A549 (cell line): ENCODE measurements at regions of chr14 and their contacts with region 1.

Region 1: GRCh38 chr14:92728759-92729370 is 19.6 kb downstream of the LGMN start:
- DNase-seq: peak in 1 of 2 experiments; percentile 28
- ATAC-seq: no peak
- H3K4me3 ChIP-seq: no peak overlapping the region
- H3K27ac ChIP-seq: peak overlapping the region in 1 of 2 experiments; percentile 73; a peak in 3 of 6 replicates
- H3K4me1 ChIP-seq: peaks cover 52% of the 10 kb centered on the region
- CTCF ChIP-seq: no peak
- EP300 ChIP-seq: no peak
- POLR2A ChIP-seq: no peak
- RAD21 ChIP-seq: no peak

Region 2: DNA sequence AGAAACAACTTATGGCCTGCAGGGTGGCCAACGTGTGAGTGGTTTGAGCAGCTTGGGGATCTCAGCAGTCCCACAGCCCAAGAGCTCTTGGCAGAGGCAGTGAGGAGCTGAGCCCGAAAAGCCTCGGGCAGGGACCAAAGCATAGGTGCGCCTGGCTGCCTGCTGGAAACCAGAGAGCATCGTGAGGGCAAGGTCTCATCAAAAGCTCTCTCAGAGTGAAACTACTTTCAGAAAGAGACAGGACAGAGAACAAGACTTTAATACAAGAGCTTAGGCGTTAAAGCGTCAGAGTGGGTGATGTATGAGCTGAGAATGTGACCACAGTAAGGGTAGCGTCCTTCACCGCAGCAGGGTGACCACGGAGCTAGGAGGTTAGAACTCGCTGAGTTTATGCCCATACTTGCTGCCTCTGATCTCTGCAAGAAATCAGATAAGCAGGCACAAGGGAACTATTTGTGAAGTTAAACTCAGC is 11.3 kb before region 1 on chr14:
- CTCF ChIA-PET with region 1: interaction called, 54 read pairs
- POLR2A ChIA-PET with region 1: no interaction called
- DNase-seq: no peak
- ATAC-seq: no peak
- H3K4me3 ChIP-seq: no peak overlapping the region
- H3K27ac ChIP-seq: no peak overlapping the region
- H3K4me1 ChIP-seq: peaks cover 15% of the 10 kb centered on the region
- CTCF ChIP-seq: no peak
- EP300 ChIP-seq: no peak
- POLR2A ChIP-seq: no peak
- RAD21 ChIP-seq: no peak

Region 3: GRCh38 chr14:92748259-92749016 is 19.6 kb after region 1 on chr14 and contains the start of gene LGMN:
- CTCF ChIA-PET with region 1: interaction called, 5 read pairs
- POLR2A ChIA-PET with region 1: interaction called, 30 read pairs
- DNase-seq: peak; percentile 94 to 97
- ATAC-seq: peak; percentile 100
- H3K4me3 ChIP-seq: peak within 1 kb of the TSS; percentile 73
- H3K27ac ChIP-seq: peak within 1 kb of the TSS; percentile 75 to 91
- H3K4me1 ChIP-seq: peaks cover 4% of the 10 kb centered on the region; the same call in 1 of the 3 replicates
- CTCF ChIP-seq: no peak
- EP300 ChIP-seq: no peak
- POLR2A ChIP-seq: peak; percentile 97
- RAD21 ChIP-seq: no peak
- polyA plus RNA-seq, gene LGMN: 106 and 136 TPM in 2 replicates

Region 4: GRCh38 chr14:92759300-92759678 is 30.4 kb after region 1 on chr14:
- CTCF ChIA-PET with region 1: no interaction called
- POLR2A ChIA-PET with region 1: no interaction called
- DNase-seq: peak in 1 of 2 experiments; percentile 51
- ATAC-seq: peak in 1 of 2 experiments; percentile 71; a peak in 3 of 6 replicates
- H3K4me3 ChIP-seq: no peak overlapping the region
- H3K27ac ChIP-seq: no peak overlapping the region
- H3K4me1 ChIP-seq: no peaks in the 10 kb centered on the region
- CTCF ChIP-seq: no peak
- EP300 ChIP-seq: no peak
- POLR2A ChIP-seq: no peak
- RAD21 ChIP-seq: no peak

Region 5: GRCh38 chr14:93395231-93395630 is 666.4 kb after region 1 on chr14:
- CTCF ChIA-PET with region 1: no interaction called
- POLR2A ChIA-PET with region 1: no interaction called
- DNase-seq: no peak
- ATAC-seq: no peak
- H3K4me3 ChIP-seq: no peak overlapping the region
- H3K27ac ChIP-seq: no peak overlapping the region
- H3K4me1 ChIP-seq: no peaks in the 10 kb centered on the region
- CTCF ChIP-seq: no peak
- EP300 ChIP-seq: no peak
- POLR2A ChIP-seq: no peak
- RAD21 ChIP-seq: no peak